ENCODE measurements at regions of chr16 and their contacts with region 1.

Region 1: DNA sequence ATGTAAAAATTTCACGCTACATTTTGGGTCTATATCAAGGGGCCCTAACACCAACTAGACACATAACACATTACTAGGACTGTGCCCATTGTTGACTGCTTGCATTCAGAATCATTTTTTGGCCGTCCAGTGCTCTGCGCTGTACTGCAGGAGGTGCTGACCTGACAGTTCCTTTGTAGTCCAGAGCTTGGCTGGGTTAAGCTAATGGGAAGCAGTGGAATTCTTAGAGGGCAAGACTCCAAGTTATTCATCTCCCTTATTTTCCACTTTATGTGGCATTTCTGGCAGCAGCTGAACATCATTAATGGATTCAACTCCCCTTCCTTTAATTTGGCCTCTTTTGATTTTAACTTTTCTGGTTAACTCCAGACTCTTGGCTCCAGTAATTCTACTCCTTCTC is 351.7 kb downstream of the CDH8 start:
- DNase-seq: no peak
- H3K4me3 ChIP-seq: no peak overlapping the region
- H3K27ac ChIP-seq: no peak overlapping the region
- H3K4me1 ChIP-seq: no peaks in the 10 kb centered on the region
- CTCF ChIP-seq: no peak

Region 2: GRCh38 chr16:61671161-61671560 is 13.4 kb before region 1 on chr16:
- CTCF ChIA-PET with region 1: no interaction called
- POLR2A ChIA-PET with region 1: no interaction called
- intact Hi-C with region 1: no loop called
- DNase-seq: no peak
- H3K4me3 ChIP-seq: no peak overlapping the region
- H3K27ac ChIP-seq: no peak overlapping the region
- H3K4me1 ChIP-seq: no peaks in the 10 kb centered on the region
- CTCF ChIP-seq: no peak

Region 3: GRCh38 chr16:61730997-61731396 is 46.5 kb after region 1 on chr16:
- CTCF ChIA-PET with region 1: no interaction called
- POLR2A ChIA-PET with region 1: no interaction called
- intact Hi-C with region 1: no loop called
- DNase-seq: no peak
- H3K4me3 ChIP-seq: no peak overlapping the region
- H3K27ac ChIP-seq: no peak overlapping the region
- H3K4me1 ChIP-seq: no peaks in the 10 kb centered on the region
- CTCF ChIP-seq: no peak

Region 4: GRCh38 chr16:61763013-61763412 is 78.5 kb after region 1 on chr16:
- CTCF ChIA-PET with region 1: no interaction called
- POLR2A ChIA-PET with region 1: no interaction called
- intact Hi-C with region 1: loop called (anchors 10 kb)
- DNase-seq: no peak
- H3K4me3 ChIP-seq: no peak overlapping the region
- H3K27ac ChIP-seq: no peak overlapping the region
- H3K4me1 ChIP-seq: no peaks in the 10 kb centered on the region
- CTCF ChIP-seq: no peak